ENCODE measurements at regions of chr7 and their contacts with region 1.

Region 1: GRCh38 chr7:88169717-88170320 is 50.0 kb downstream of the SRI start:
- DNase-seq: peak in 3 of 9 donors; percentile 1 to 5 (median 2)
- ATAC-seq: no peak
- H3K4me3 ChIP-seq: no peak overlapping the region
- H3K4me3 Mint-ChIP-seq: no peak overlapping the region
- H3K27ac ChIP-seq: no peak overlapping the region
- H3K27ac Mint-ChIP-seq: no peak overlapping the region
- H3K4me1 ChIP-seq: no peaks in the 10 kb centered on the region
- H3K4me1 Mint-ChIP-seq: peaks cover 0 to 3% (median 0%) of the 10 kb centered on the region in 7 donors
- H3K27me3 ChIP-seq: no peaks in the 10 kb centered on the region
- H3K27me3 Mint-ChIP-seq: no peaks in the 10 kb centered on the region

Region 2: GRCh38 chr7:87506246-87507180 is 663.3 kb before region 1 on chr7:
- CTCF ChIA-PET with region 1: no interaction called
- POLR2A ChIA-PET with region 1: no interaction called
- intact Hi-C with region 1: loop called in 1 of 2 experiments (anchors 2 kb)
- DNase-seq: peak in 3 of 9 donors; percentile 4 to 14 (median 12)
- ATAC-seq: no peak
- H3K4me3 ChIP-seq: no peak overlapping the region
- H3K4me3 Mint-ChIP-seq: no peak overlapping the region
- H3K27ac ChIP-seq: no peak overlapping the region
- H3K27ac Mint-ChIP-seq: no peak overlapping the region
- H3K4me1 ChIP-seq: no peaks in the 10 kb centered on the region
- H3K4me1 Mint-ChIP-seq: peaks cover 0 to 16% (median 0%) of the 10 kb centered on the region in 7 donors
- H3K27me3 ChIP-seq: no peaks in the 10 kb centered on the region
- H3K27me3 Mint-ChIP-seq: no peaks in the 10 kb centered on the region

Region 3: GRCh38 chr7:87797798-87798403 is 371.9 kb before region 1 on chr7:
- CTCF ChIA-PET with region 1: interaction called, 3 read pairs
- POLR2A ChIA-PET with region 1: no interaction called
- intact Hi-C with region 1: loop called (anchors 1 kb)
- DNase-seq: peak in 7 of 9 donors; percentile 11 to 49 (median 38)
- ATAC-seq: peak; percentile 77
- H3K4me3 ChIP-seq: no peak overlapping the region
- H3K4me3 Mint-ChIP-seq: no peak overlapping the region
- H3K27ac ChIP-seq: no peak overlapping the region
- H3K27ac Mint-ChIP-seq: no peak overlapping the region
- H3K4me1 ChIP-seq: no peaks in the 10 kb centered on the region
- H3K4me1 Mint-ChIP-seq: peaks cover 0 to 2% (median 0%) of the 10 kb centered on the region in 7 donors
- H3K27me3 ChIP-seq: no peaks in the 10 kb centered on the region
- H3K27me3 Mint-ChIP-seq: peaks cover 7 to 19% (median 18%) of the 10 kb centered on the region in 5 donors

Region 4: GRCh38 chr7:88480896-88481295 is 311.1 kb after region 1 on chr7:
- CTCF ChIA-PET with region 1: no interaction called
- POLR2A ChIA-PET with region 1: no interaction called
- intact Hi-C with region 1: no loop called
- DNase-seq: no peak
- ATAC-seq: no peak
- H3K4me3 ChIP-seq: no peak overlapping the region
- H3K4me3 Mint-ChIP-seq: no peak overlapping the region
- H3K27ac ChIP-seq: no peak overlapping the region
- H3K27ac Mint-ChIP-seq: no peak overlapping the region
- H3K4me1 ChIP-seq: no peaks in the 10 kb centered on the region
- H3K4me1 Mint-ChIP-seq: no peaks in the 10 kb centered on the region
- H3K27me3 ChIP-seq: no peaks in the 10 kb centered on the region
- H3K27me3 Mint-ChIP-seq: peaks cover 0 to 5% (median 0%) of the 10 kb centered on the region in 5 donors

Region 5: GRCh38 chr7:88522771-88523293 is 353.0 kb after region 1 on chr7:
- CTCF ChIA-PET with region 1: no interaction called
- POLR2A ChIA-PET with region 1: no interaction called
- intact Hi-C with region 1: no loop called
- DNase-seq: no peak
- ATAC-seq: no peak
- H3K4me3 ChIP-seq: no peak overlapping the region
- H3K4me3 Mint-ChIP-seq: no peak overlapping the region
- H3K27ac ChIP-seq: no peak overlapping the region
- H3K27ac Mint-ChIP-seq: no peak overlapping the region
- H3K4me1 ChIP-seq: no peaks in the 10 kb centered on the region
- H3K4me1 Mint-ChIP-seq: no peaks in the 10 kb centered on the region
- H3K27me3 ChIP-seq: no peaks in the 10 kb centered on the region
- H3K27me3 Mint-ChIP-seq: peaks cover 0 to 6% (median 0%) of the 10 kb centered on the region in 5 donors

Measured in naive thymus-derived CD4-positive, alpha-beta T cell (primary cell).